Heart right ventricle (tissue), 16 donors: ENCODE measurements at regions of chr7 and their contacts with region 1.

Region 1: GRCh38 chr7:107471292-107472070 is 1.6 kb downstream of the GPR22 start:
- DNase-seq: no peak
- ATAC-seq: peak in 3 of 8 donors; percentile 58 to 70 (median 62)
- H3K4me3 ChIP-seq: peak overlapping the region; percentile 5 to 49 (median 34)
- H3K27ac ChIP-seq: peak overlapping the region; percentile 46 to 86 (median 78)
- H3K4me1 ChIP-seq: peaks cover 0 to 17% (median 0%) of the 10 kb centered on the region in 9 donors
- H3K27me3 ChIP-seq: no peaks in the 10 kb centered on the region
- CTCF ChIP-seq: peak in 3 of 9 donors; percentile 33 to 40 (median 37)

Region 2: GRCh38 chr7:106788637-106789036 is 682.8 kb before region 1 on chr7:
- intact Hi-C with region 1: no loop called
- DNase-seq: no peak
- ATAC-seq: no peak
- H3K4me3 ChIP-seq: no peak overlapping the region
- H3K27ac ChIP-seq: no peak overlapping the region
- H3K4me1 ChIP-seq: no peaks in the 10 kb centered on the region
- H3K27me3 ChIP-seq: peaks cover 0 to 5% (median 0%) of the 10 kb centered on the region in 7 donors
- CTCF ChIP-seq: no peak

Region 3: GRCh38 chr7:107423847-107424246 is 47.6 kb before region 1 on chr7:
- intact Hi-C with region 1: no loop called
- DNase-seq: no peak
- ATAC-seq: no peak
- H3K4me3 ChIP-seq: no peak overlapping the region
- H3K27ac ChIP-seq: no peak overlapping the region
- H3K4me1 ChIP-seq: peaks cover 0 to 11% (median 0%) of the 10 kb centered on the region in 9 donors
- H3K27me3 ChIP-seq: no peaks in the 10 kb centered on the region
- CTCF ChIP-seq: no peak

Region 4: GRCh38 chr7:107494315-107494751 is 22.9 kb after region 1 on chr7:
- intact Hi-C with region 1: loop called in 1 of 10 experiments (anchors 2 kb)
- DNase-seq: no peak
- ATAC-seq: peak in 2 of 8 donors; percentile 62 to 68
- H3K4me3 ChIP-seq: no peak overlapping the region
- H3K27ac ChIP-seq: peak overlapping the region in 3 of 10 donors; percentile 8 to 35 (median 10)
- H3K4me1 ChIP-seq: peaks cover 0 to 16% (median 3%) of the 10 kb centered on the region in 9 donors
- H3K27me3 ChIP-seq: no peaks in the 10 kb centered on the region
- CTCF ChIP-seq: no peak

Region 5: DNA sequence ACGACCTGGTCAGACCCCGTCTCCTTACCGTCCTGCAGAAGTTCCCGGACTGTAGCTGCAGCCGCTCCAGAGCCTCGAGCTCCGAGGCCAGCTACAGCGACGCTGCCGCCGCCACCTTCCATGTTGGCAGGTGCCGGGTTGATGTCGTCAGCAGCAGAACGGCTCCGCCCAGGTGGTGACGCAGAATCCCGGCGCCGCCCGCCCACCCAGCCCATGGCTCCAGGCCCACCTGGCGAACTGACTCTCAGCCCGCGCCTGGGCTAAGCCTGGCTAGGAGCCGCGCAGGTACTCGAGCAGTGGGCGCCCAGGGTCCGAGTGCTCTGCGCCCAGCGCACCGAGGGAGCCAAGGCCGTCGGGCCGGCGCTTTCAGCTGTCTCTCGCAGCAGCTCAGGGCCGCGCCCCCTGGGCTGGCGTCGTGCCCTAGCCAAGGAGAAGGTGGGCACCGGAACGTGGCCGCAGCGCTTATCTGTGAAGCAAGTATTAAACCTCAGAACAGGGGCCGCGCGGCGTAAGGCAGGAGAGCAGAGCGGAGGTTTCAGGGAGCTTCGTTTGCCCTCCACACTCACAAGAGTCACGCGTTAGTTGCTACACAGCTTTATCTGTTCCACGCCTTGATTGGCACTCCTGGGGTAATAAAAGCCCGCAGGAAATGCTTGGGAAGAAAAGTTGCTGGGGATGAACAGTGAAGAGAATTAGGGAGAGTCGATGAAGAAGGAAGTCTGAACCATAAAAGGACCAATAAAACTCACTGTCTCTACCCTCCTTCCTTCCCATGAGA is 92.5 kb after region 1 on chr7 and contains the starts of genes COG5 and DUS4L:
- intact Hi-C with region 1: loop called in 1 of 10 experiments (anchors 5 kb)
- DNase-seq: peak; percentile 85 to 86
- ATAC-seq: peak; percentile 94 to 98 (median 96)
- H3K4me3 ChIP-seq: peak within 1 kb of the TSS; percentile 68 to 99 (median 87)
- H3K27ac ChIP-seq: peak within 1 kb of the TSS; percentile 88 to 98 (median 94)
- H3K4me1 ChIP-seq: peaks cover 0 to 57% (median 49%) of the 10 kb centered on the region in 9 donors
- H3K27me3 ChIP-seq: no peaks in the 10 kb centered on the region
- CTCF ChIP-seq: peak in 1 of 9 donors; percentile 3
- total RNA-seq, gene COG5: 44.2 to 65.8 (median 53.0) TPM
- total RNA-seq, gene DUS4L: 6.6 to 10.6 (median 9.0) TPM

Region 6: GRCh38 chr7:107743567-107744344 is 272.3 kb after region 1 on chr7 and contains the start of gene CBLL1:
- intact Hi-C with region 1: loop called in 1 of 10 experiments (anchors 5 kb)
- DNase-seq: peak; percentile 97
- ATAC-seq: peak; percentile 98 to 99 (median 99)
- H3K4me3 ChIP-seq: peak within 1 kb of the TSS; percentile 52 to 97 (median 88)
- H3K27ac ChIP-seq: peak within 1 kb of the TSS; percentile 92 to 98 (median 96)
- H3K4me1 ChIP-seq: peaks cover 11 to 49% (median 46%) of the 10 kb centered on the region in 9 donors
- H3K27me3 ChIP-seq: no peaks in the 10 kb centered on the region
- CTCF ChIP-seq: peak; percentile 42 to 93 (median 73)
- total RNA-seq, gene CBLL1: 18.3 to 31.3 (median 23.1) TPM